HEK293T (cell line): ENCODE measurements at regions of chr1 and their contacts with region 1.

Region 1: DNA sequence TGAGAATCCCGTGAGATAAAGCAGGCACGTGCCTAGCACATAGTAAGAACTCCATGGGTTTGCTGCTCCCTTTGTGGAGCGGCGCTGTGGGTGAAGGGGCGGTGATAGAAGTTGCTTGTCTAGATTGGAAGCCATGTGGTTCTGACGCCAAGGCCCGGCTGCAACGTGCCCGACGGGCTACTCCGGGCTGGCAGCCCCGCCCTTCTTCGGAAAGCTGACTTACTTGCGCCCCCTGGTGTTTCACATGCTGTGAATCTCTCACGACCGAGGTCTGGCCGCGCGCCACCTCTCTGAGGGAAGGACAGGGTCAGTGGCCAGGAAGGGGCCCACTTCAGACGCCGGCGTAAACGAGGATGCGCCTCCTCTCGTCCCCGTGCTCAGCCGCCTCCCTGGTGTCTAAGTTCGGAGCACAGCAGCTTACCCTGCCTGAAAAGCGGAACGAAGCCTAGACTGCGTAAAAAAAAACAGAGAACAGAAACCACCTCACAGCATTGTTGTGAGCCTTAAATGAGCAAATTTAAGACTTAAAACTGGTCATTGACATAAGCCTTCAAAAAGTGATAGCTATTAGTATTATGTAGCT is 42.6 kb upstream of the WNT2B start:
- DNase-seq: peak; percentile 93

Region 2: GRCh38 chr1:112390775-112391602 is 75.2 kb before region 1 on chr1:
- CTCF ChIA-PET with region 1: interaction called, 26 read pairs
- POLR2A ChIA-PET with region 1: interaction called, 22 read pairs
- DNase-seq: peak; percentile 92

Region 3: GRCh38 chr1:112395821-112396652 is 70.1 kb before region 1 on chr1 and contains the start of gene CTTNBP2NL:
- CTCF ChIA-PET with region 1: interaction called, 26 read pairs
- POLR2A ChIA-PET with region 1: interaction called, 22 read pairs
- DNase-seq: peak; percentile 99

Region 4: DNA sequence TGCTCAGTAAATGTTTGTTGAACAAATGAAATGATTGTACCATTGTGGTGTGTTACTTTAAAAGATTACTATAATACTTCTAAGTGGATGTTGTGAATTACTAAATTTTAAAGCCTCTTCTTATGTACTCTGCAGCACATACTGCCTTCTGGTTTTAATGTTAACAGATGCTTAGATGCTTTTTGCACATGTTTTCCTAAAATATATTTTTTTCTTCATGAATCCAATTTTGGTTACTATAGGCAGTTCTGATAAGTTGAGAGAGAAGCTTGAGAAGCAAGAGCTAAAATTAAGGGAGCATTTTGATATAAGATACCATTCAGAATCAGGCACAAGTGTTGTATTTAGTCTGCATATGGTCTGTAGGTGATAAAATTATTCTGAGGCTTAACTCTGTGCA is 48.9 kb before region 1 on chr1:
- CTCF ChIA-PET with region 1: no interaction called
- POLR2A ChIA-PET with region 1: no interaction called
- DNase-seq: no peak

Region 5: GRCh38 chr1:112527266-112528010 is 61.3 kb after region 1 on chr1:
- CTCF ChIA-PET with region 1: no interaction called
- POLR2A ChIA-PET with region 1: no interaction called
- DNase-seq: no peak